Left cardiac atrium (tissue), 4 donors: ENCODE measurements at regions of chr9 and their contacts with region 1.

Region 1: DNA sequence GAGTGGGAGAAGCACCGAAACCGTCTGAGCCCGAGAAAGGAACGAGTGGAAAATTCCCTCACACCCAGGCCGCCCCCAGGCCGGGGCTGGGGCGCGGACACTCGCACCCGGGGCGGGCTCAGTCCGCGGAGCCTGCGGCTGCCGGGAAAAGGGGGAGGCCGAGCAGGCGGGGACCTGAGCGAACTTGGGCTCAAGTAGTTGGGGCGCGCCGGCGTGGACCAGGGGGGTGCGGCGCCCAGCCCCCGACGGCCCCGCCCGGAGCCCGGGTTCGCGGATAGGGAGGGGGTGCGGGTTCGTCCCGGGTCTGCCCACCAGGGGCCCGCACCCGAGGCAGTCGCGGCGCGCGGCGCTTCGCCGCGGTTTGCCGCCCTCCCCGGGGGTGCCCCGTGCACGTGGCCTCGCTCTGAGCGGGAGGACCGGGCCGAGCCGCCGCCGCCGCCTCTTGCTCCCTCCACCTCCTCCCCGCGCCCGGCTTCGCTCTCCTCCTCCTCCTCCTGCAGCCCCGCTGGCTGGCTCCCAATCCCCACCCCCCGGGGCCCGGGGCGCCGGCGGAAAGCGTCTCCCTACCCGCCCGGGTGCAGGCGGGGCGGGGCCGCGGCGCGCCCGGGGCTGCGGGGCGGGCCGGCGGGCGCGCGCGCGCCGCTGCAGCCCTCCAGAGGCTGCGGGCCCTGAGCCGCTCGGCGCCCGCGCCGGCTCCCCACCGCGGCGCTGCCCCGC is 1.1 kb upstream of the NFIB start:
- DNase-seq: peak; percentile 94
- ATAC-seq: peak; percentile 79 to 81

Region 2: DNA sequence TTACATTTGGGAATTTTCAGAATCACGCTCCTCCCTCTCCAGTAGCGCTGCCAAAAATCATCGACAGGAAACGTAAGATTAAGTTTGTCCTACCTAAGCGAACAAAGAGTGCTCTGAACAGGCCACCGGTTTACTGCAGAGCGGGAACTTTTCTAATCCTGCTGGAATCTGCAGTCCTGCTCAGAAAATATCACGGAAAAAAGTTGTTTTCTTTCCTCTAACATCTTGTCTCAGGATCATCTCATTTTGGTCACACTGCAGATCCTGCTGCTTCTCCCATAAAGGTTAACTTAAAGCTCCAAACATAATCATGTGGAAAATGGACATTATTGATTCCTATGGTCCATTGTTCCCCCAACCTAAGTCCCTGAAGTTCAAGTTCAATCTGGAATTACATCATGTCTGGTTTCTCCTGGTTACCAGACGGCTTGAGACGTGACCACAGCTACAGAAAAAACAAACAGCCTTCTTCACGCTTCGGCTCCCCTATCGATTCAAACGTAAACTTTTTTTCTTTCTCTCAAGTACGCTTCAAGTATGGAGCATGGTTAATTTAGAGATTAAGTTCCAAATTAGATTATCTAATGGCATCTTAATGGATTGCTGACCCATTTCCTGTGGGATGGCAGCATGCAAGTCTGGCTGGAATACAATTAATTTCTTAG is 218.7 kb before region 1 on chr9:
- intact Hi-C with region 1: loop called in 1 of 2 experiments (anchors 5 kb)
- DNase-seq: no peak
- ATAC-seq: peak; percentile 70 to 86

Region 3: GRCh38 chr9:14231196-14231990 is 83.7 kb before region 1 on chr9:
- intact Hi-C with region 1: no loop called
- DNase-seq: no peak
- ATAC-seq: no peak

Region 4: GRCh38 chr9:14277244-14277643 is 37.8 kb before region 1 on chr9:
- intact Hi-C with region 1: loop called in 1 of 2 experiments (anchors 5 kb)
- DNase-seq: no peak
- ATAC-seq: peak; percentile 28 to 49

Region 5: GRCh38 chr9:14347406-14348122 is 32.5 kb after region 1 on chr9:
- intact Hi-C with region 1: loop called in 1 of 2 experiments (anchors 5 kb)
- DNase-seq: peak; percentile 75
- ATAC-seq: peak; percentile 48 to 50

Region 6: DNA sequence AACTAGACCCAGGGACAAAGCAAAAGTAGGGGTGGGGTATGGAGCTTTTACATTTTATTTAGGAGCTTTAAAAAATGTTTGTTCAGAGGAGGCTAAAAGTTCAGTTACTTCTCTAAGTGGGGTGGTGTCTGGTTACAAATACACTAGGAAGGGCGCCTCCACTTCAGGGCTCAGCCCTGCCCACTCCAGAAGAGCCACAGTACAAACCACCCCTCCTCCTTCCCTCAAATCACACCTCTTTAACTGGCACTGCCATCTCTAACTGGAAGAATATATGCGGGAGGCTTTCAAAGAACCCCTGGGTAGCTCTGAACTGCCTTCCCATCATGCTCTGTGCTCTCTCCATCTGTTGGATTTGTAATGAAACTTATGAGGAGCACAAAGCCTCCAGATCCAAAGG is 97.7 kb after region 1 on chr9:
- intact Hi-C with region 1: no loop called
- DNase-seq: no peak
- ATAC-seq: no peak